PC-3 (cell line): ENCODE measurements at regions of chr2 and their contacts with region 1.

Region 1: DNA sequence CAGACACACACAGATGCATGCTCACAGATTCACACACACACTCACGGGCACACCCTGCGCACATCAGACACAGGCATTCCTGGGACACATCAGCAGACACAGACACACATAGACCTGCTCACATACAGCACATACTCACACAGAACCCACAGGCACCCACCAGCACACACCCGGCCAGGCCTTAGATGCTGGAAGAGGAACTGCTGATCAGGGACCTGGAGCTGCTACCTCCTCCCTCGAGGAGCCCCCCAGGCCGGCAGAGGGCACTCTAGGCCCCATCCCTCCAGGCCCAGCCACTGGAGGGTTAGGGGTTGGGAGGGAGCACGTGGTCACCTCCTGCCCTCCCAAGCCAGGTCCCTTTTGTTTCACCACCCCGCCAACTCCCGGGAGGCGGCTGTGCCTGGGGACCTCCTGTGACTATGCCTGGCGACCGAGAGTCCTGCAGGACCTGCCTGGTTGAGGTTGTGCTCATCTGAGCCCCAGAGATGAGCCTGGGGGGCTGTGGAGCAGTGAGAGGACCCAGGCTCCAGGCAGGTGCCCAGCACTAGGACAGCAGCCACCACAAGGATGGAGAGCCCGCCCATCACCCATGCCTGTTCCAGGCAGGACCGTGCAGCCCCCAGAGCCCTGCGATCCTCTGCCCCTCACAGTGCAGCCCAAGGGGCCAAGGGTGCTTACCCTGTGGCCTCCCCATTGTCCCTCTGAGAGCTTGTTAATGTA is 21.0 kb upstream of the PTMA start:
- DNase-seq: peak; percentile 31
- ATAC-seq: peak; percentile 60
- H3K4me3 ChIP-seq: no peak overlapping the region
- H3K27ac ChIP-seq: no peak overlapping the region
- H3K4me1 ChIP-seq: no peaks in the 10 kb centered on the region
- H3K27me3 ChIP-seq: no peaks in the 10 kb centered on the region
- CTCF ChIP-seq: peak; percentile 57

Region 2: DNA sequence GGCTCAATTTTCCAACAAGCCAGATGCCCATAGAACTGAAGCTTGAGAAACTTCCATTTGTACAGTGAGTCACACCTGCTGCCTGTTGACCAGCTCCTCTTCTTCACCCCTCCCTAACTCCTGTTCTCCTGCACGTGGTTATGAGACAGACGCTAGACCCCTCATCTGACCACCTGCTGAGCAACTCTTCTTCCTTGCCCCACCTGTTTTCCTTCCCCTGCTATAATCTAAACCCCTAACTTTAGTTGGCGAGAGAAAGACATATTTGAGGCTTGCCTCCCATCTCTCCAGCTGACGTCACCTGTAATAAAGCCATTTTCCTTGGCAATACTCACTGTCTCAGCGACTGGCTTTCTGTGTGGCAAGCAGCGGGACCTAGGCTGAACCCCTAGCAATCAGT is 844.8 kb before region 1 on chr2:
- CTCF ChIA-PET with region 1: no interaction called
- POLR2A ChIA-PET with region 1: interaction called, 22 read pairs
- intact Hi-C with region 1: no loop called
- DNase-seq: no peak
- ATAC-seq: 0 out of 2 replicates have a peak, but pooled peaks have one; percentile 48
- H3K4me3 ChIP-seq: no peak overlapping the region
- H3K27ac ChIP-seq: no peak overlapping the region
- H3K4me1 ChIP-seq: no peaks in the 10 kb centered on the region
- H3K27me3 ChIP-seq: no peaks in the 10 kb centered on the region
- CTCF ChIP-seq: no peak

Region 3: DNA sequence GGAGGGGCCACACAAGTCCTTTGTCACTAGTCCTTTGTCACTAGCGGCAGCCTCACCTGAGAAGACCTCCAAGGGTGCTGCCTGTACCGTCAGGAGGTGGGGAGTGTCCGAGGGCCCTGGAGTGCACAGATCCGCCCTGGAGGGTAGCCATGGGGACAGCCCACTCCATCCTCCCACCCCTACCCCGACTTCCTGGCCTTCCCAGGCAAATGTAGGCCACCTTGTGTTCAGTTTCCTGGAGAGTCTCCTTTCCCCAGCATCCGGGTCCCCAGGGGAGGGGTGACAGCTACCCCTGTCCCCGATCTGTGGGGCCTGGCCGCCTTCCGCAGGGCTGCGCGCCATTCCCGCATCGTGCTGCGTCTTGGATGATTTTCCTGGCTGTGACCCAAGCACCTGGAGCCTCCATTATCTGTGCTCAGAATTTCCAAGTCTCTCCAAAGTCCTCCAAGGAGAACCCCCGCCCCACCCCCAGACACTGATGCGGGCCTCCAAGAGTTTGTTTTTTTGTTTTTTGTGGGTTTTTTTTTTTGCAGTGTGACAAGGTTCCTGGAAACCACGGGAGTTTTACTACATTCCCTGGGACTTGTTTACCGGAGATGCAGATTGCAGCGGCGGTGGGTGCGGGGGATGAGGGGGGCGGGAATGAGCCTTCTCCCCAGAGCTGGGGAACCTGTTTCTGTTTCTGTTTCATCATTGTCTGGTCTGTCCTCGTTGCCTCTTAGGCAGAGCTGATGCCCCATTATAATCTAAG is 66.0 kb before region 1 on chr2:
- CTCF ChIA-PET with region 1: no interaction called
- POLR2A ChIA-PET with region 1: no interaction called
- intact Hi-C with region 1: no loop called
- DNase-seq: peak; percentile 55
- ATAC-seq: peak; percentile 70
- H3K4me3 ChIP-seq: peak overlapping the region; percentile 31; the same call in 1 of the 2 replicates
- H3K27ac ChIP-seq: peak overlapping the region; percentile 59
- H3K4me1 ChIP-seq: peaks cover 36% of the 10 kb centered on the region
- H3K27me3 ChIP-seq: no peaks in the 10 kb centered on the region
- CTCF ChIP-seq: no peak

Region 4: DNA sequence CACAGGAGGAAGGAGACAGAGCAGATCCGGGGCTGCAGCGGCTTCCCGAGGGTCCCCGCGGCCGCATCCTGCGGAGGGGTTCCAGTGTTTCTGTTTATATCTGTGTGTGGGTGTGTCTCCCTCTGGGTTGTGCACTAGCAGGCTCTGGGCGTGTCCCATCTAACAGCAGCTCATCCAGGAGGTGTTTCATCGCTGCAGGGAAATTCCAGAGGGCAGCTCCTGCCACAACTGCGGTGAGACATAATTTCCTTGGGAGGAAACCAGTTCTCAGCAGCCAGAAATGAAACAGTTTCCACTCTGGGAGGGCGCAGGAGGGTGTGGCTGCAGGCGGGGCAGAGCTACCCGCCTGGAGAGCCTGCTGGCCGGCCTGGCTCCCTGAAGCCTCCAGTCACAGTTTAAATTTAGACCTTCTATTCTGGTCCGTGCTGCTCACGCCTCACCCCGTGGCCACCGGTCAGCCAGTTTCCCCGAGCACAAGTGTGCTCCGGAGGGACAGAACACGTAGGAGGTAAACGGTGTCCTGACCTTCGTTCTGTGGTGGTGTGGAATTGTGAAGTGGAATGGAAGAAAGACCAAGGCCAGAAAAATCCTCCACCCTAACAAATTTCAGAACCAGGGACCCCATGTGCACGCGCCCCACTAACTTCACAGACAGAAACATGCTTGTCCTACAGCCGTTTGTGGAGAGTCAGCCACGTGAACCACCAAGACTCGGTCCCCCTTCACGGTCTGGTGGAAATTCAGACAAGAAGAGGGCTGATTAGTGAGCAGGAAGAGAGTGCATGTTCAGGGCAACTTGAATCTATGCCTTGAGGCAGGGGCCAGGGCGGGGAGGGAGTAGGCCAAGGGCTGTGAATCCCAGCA is 44.4 kb before region 1 on chr2:
- CTCF ChIA-PET with region 1: no interaction called
- POLR2A ChIA-PET with region 1: no interaction called
- intact Hi-C with region 1: no loop called
- DNase-seq: peak; percentile 98
- ATAC-seq: peak; percentile 96
- H3K4me3 ChIP-seq: peak overlapping the region; percentile 66
- H3K27ac ChIP-seq: peak overlapping the region; percentile 97
- H3K4me1 ChIP-seq: peaks cover 17% of the 10 kb centered on the region
- H3K27me3 ChIP-seq: no peaks in the 10 kb centered on the region
- CTCF ChIP-seq: no peak